ENCODE measurements at regions of chr1 and their contacts with region 1.

Region 1: GRCh38 chr1:89499320-89499719 is 25.3 kb upstream of the LRRC8B start:
- DNase-seq: no peak
- H3K4me3 ChIP-seq: no peak overlapping the region
- H3K27ac ChIP-seq: no peak overlapping the region
- H3K4me1 ChIP-seq: no peaks in the 10 kb centered on the region
- H3K27me3 ChIP-seq: no peaks in the 10 kb centered on the region

Region 2: DNA sequence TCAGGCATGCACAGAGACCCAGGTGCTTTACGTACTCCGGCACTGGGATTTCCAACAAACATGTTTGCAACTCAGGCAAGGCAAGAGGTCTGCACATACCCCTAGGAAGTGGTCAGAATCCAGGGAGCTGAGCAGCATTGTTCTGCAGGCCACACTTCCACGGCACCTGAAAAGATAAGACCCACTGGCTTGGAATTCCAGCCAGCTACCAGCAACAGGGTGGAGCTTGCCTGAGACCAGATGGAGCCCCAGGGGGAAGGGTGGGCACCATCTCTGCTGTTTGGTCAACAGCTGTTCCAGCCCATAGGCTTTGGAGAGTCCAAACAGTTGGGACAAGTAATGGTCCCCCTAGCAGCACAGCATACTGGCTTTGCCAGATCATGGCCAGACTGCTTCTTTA is 26.4 kb before region 1 on chr1:
- CTCF ChIA-PET with region 1: no interaction called
- POLR2A ChIA-PET with region 1: no interaction called
- DNase-seq: no peak
- H3K4me3 ChIP-seq: no peak overlapping the region
- H3K27ac ChIP-seq: no peak overlapping the region
- H3K4me1 ChIP-seq: no peaks in the 10 kb centered on the region
- H3K27me3 ChIP-seq: peaks cover 2 to 33% (median 14%) of the 10 kb centered on the region in 5 experiments

Region 3: DNA sequence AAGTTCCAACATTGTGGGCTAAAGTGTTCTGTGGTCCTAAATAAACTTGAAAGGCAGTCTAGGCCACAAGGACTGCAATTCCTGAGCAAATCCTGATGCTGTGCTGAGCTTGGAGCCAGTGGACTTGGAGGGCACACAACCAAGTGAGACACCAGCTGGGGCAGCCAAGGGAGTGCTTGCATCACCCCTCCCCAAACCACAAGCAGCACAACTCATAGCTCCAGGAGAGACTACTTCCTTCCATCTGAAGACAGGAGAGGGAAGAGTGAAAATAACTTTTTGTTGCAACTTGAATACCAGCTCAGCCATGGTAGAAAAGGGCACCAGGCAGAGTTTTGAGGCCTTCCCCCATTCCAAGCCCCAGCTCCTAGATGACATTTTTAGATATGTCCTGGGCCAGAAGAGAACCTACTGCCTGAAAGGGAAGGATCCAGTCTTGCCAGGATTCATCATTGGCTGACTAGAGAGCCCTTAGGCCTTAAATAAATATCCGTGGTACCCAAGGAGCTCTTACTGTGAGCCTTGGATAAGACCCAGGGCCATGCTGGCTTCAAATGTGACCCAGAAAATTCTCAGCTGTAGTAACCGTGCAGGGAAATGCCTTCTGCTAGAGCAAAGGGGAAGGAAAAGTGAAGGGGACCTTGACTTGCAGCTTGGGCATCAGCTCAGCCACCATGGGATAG is 10.1 kb before region 1 on chr1:
- CTCF ChIA-PET with region 1: interaction called, 13 read pairs
- POLR2A ChIA-PET with region 1: interaction called, 5 read pairs
- DNase-seq: peak; percentile 25 to 79 (median 68)
- H3K4me3 ChIP-seq: no peak overlapping the region
- H3K27ac ChIP-seq: no peak overlapping the region
- H3K4me1 ChIP-seq: peaks cover 7 to 35% (median 25%) of the 10 kb centered on the region in 4 experiments
- H3K27me3 ChIP-seq: peaks cover 0 to 1% (median 0%) of the 10 kb centered on the region in 5 experiments

Region 4: DNA sequence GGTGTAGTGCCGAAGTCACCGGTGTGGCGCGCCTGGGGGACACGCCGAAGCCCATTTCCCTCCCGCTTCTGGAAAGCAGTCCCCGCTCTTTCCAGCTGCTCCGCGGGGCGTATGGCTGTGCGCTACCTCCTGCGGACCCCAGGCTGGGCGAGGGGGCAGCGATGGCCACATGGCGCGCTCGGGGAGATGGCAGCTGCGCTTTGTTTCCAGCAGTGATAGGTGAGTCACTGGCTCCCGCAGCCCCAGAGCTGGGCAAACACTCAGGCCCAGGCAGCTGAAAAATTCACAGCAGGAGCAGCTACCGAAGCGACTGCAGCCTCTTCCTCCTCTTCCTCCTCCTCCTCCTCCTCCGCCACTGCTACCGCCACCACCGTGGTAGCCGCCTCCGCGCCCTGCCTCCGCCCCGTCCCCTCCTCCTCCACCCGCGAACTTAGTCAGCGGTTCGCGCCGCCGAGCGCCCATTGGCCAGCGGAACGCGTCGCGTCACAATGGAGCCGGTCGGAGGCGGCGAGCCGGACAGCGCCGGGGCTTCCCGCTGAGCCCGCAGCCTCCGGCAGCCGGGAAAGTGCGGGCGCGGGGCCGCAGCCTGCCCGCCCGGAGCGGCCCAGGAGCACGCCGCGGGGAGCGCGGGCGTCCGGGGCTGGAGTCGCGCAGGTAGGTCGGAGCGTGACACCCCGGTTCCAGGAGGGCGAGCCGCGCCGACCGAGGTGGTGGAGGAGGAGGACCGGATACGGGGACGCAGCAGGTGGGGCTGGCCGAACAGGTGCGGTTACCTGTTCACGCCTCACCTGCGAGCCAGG is 25.2 kb after region 1 on chr1 and contains the start of gene LRRC8B:
- CTCF ChIA-PET with region 1: no interaction called
- POLR2A ChIA-PET with region 1: no interaction called
- DNase-seq: peak; percentile 91 to 93 (median 92)
- H3K4me3 ChIP-seq: peak within 1 kb of the TSS; percentile 81 to 95 (median 90)
- H3K27ac ChIP-seq: peak within 1 kb of the TSS; percentile 85 to 93
- H3K4me1 ChIP-seq: peaks cover 4 to 36% (median 33%) of the 10 kb centered on the region in 4 experiments
- H3K27me3 ChIP-seq: no peaks in the 10 kb centered on the region

Region 5: GRCh38 chr1:89632657-89633247 is 133.4 kb after region 1 on chr1 and contains the start of gene LRRC8C:
- CTCF ChIA-PET with region 1: no interaction called
- POLR2A ChIA-PET with region 1: no interaction called
- DNase-seq: peak; percentile 87 to 93 (median 91)
- H3K4me3 ChIP-seq: peak within 1 kb of the TSS; percentile 67 to 97 (median 87)
- H3K27ac ChIP-seq: peak within 1 kb of the TSS; percentile 56 to 80
- H3K4me1 ChIP-seq: peaks cover 0 to 42% (median 21%) of the 10 kb centered on the region in 4 experiments
- H3K27me3 ChIP-seq: no peaks in the 10 kb centered on the region